ENCODE measurements at regions of chr17 and their contacts with region 1.

Region 1: GRCh38 chr17:68101075-68101992 is 65.8 kb downstream of the KPNA2 start:
- DNase-seq: peak; percentile 38 to 83 (median 67)
- ATAC-seq: peak; percentile 70
- H3K4me3 ChIP-seq: peak overlapping the region; percentile 75 to 83
- H3K4me3 Mint-ChIP-seq: peak overlapping the region; percentile 96
- H3K27ac ChIP-seq: peak overlapping the region; percentile 73 to 88
- H3K27ac Mint-ChIP-seq: peak overlapping the region; percentile 97
- H3K4me1 ChIP-seq: peaks cover 12% of the 10 kb centered on the region
- H3K4me1 Mint-ChIP-seq: peaks cover 42% of the 10 kb centered on the region
- H3K27me3 ChIP-seq: no peaks in the 10 kb centered on the region
- H3K27me3 Mint-ChIP-seq: no peaks in the 10 kb centered on the region
- CTCF ChIP-seq: no peak

Region 2: DNA sequence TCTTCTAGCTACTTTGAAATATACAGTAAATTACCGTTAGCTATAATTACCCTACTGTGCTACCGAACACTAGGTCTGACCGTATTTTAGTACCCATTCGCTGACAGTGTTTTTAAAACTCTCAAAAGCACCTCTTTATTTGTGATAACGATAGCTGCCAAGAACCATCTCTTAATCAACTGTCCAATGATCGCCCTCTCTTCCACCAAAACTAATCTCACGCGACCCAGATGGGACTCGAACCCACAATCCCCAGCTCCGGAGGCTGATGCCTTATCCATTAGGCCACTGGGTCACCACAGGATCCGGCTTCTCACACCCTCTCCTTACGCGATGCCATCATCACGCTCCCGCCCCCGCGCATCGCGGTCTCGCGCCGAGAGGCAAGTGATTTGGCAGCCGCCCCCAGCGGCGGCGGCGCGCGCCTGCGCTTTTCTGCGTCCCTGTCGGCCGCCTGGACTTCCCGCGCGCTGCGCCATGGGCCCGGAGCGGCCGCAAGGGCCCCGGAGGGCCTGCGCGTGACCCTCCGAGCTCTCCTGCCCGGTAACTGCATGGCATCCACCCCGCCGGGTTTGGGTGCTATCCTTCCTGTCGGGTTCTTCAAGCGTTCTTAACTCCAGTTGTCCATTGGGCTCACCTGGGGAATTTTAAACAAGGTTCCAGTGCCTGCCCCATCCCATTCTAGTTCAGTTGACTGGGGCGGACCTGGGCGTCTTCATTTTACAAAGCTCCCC is 81.5 kb before region 1 on chr17:
- CTCF ChIA-PET with region 1: no interaction called
- POLR2A ChIA-PET with region 1: no interaction called
- intact Hi-C with region 1: loop called in 1 of 2 experiments (anchors 5 kb)
- DNase-seq: peak; percentile 93 to 99 (median 96)
- ATAC-seq: peak; percentile 92
- H3K4me3 ChIP-seq: peak overlapping the region; percentile 64 to 71
- H3K4me3 Mint-ChIP-seq: peak overlapping the region; percentile 84
- H3K27ac ChIP-seq: peak overlapping the region; percentile 58 to 64
- H3K27ac Mint-ChIP-seq: peak overlapping the region; percentile 93
- H3K4me1 ChIP-seq: peaks cover 6% of the 10 kb centered on the region
- H3K4me1 Mint-ChIP-seq: peaks cover 23% of the 10 kb centered on the region
- H3K27me3 ChIP-seq: no peaks in the 10 kb centered on the region
- H3K27me3 Mint-ChIP-seq: no peaks in the 10 kb centered on the region
- CTCF ChIP-seq: peak; percentile 33

Region 3: GRCh38 chr17:68054296-68054900 is 46.9 kb before region 1 on chr17:
- CTCF ChIA-PET with region 1: no interaction called
- POLR2A ChIA-PET with region 1: no interaction called
- intact Hi-C with region 1: no loop called
- DNase-seq: no peak
- ATAC-seq: no peak
- H3K4me3 ChIP-seq: no peak overlapping the region
- H3K4me3 Mint-ChIP-seq: no peak overlapping the region
- H3K27ac ChIP-seq: no peak overlapping the region
- H3K27ac Mint-ChIP-seq: no peak overlapping the region
- H3K4me1 ChIP-seq: no peaks in the 10 kb centered on the region
- H3K4me1 Mint-ChIP-seq: peaks cover 5% of the 10 kb centered on the region
- H3K27me3 ChIP-seq: no peaks in the 10 kb centered on the region
- H3K27me3 Mint-ChIP-seq: no peaks in the 10 kb centered on the region
- CTCF ChIP-seq: no peak

Region 4: DNA sequence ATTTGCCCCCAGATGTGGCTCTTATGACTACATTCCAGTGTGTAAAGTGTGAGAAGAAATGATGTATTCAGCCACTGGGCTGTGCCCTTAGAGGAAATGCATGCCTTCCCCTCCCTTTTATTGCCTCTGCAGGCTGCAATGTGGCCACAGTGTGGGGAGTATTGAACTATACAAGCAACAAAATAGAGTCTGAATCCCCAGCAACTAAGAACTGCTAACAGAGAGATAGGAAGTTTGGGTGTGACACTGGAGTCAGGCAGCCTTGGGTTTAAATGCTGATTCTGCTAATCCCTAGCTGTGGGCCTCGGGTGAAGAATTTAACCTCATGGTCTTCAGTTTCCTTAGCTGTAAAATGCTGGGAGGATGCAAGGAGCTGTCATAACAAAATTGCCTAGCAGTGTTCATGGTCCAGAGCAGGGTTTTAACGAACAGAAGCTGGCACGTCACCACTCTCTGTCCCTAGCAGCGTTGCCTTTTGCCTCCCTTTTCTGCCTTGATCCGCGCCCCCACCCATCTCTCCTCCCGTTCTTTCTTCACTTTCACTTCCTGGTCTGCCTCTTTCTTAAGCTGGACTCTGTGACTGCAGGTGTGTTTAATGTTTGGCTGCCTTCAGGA is 15.5 kb before region 1 on chr17:
- CTCF ChIA-PET with region 1: no interaction called
- POLR2A ChIA-PET with region 1: interaction called, 4 read pairs
- intact Hi-C with region 1: loop called in 1 of 2 experiments (anchors 2 kb)
- DNase-seq: peak in 3 of 9 experiments; percentile 23 to 56 (median 34)
- ATAC-seq: peak; percentile 16
- H3K4me3 ChIP-seq: peak overlapping the region; percentile 16 to 25
- H3K4me3 Mint-ChIP-seq: peak overlapping the region; percentile 77
- H3K27ac ChIP-seq: peak overlapping the region in 1 of 2 experiments; percentile 48
- H3K27ac Mint-ChIP-seq: peak overlapping the region; percentile 69
- H3K4me1 ChIP-seq: peaks cover 32% of the 10 kb centered on the region
- H3K4me1 Mint-ChIP-seq: peaks cover 46% of the 10 kb centered on the region
- H3K27me3 ChIP-seq: no peaks in the 10 kb centered on the region
- H3K27me3 Mint-ChIP-seq: no peaks in the 10 kb centered on the region
- CTCF ChIP-seq: no peak

Region 5: GRCh38 chr17:68152161-68152571 is 50.8 kb after region 1 on chr17:
- CTCF ChIA-PET with region 1: no interaction called
- POLR2A ChIA-PET with region 1: no interaction called
- intact Hi-C with region 1: no loop called
- DNase-seq: no peak
- ATAC-seq: no peak
- H3K4me3 ChIP-seq: no peak overlapping the region
- H3K4me3 Mint-ChIP-seq: no peak overlapping the region
- H3K27ac ChIP-seq: no peak overlapping the region
- H3K27ac Mint-ChIP-seq: no peak overlapping the region
- H3K4me1 ChIP-seq: no peaks in the 10 kb centered on the region
- H3K4me1 Mint-ChIP-seq: no peaks in the 10 kb centered on the region
- H3K27me3 ChIP-seq: no peaks in the 10 kb centered on the region
- H3K27me3 Mint-ChIP-seq: no peaks in the 10 kb centered on the region
- CTCF ChIP-seq: no peak

Measured in CD8-positive, alpha-beta T cell (primary cell).